ENCODE measurements at regions of chr4 and their contacts with region 1.

Region 1: DNA sequence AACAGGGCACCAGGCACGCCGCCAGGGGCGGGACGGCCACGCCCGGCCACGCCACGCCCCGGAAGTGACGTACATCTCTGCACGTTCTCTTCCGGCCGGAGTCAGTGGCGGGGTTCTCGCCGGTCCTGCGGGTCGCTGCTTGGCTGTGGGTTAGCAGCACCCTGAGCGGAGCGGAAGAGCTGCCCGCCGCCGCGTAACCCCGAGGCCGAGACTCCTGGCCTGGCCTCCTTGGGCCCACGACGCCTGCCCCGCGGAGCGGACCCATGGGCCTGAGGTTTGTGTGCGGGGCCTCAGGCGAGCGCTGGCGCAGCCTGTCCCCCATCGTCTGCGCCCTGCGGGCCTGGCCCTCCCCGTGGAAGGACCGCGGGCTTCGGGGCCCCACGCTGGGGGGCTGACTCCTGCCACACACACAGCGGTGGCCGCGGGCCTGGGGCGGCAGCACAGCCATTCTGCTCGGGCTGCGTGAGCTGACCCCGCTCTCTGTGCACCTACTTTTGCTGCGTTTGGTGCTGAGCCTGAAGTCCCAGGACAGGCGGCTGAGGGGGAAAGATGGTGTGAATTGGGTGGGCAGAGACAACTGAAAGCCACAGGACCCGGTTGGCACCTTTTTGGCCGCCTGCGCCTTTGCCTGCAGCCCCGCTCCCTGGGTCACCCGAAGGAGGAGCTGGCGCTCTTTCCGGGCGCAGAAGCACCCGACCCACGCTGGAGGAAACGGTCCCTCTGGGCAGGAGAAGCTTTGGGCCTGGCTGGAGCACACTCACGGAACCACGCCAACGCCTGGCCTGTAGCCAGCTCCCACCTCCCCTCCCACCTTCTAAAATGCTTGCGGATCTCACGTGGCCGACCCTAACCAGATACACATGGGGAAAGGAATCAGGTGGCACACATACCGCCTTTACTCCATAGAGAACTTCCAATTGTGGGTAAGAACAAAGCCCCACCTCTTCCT is 28.1 kb downstream of the NOP14 start:
- DNase-seq: peak; percentile 97
- ATAC-seq: peak; percentile 75
- H3K4me3 Mint-ChIP-seq: peak overlapping the region; percentile 84
- H3K27ac Mint-ChIP-seq: peak overlapping the region; percentile 89
- H3K4me1 Mint-ChIP-seq: peaks cover 55% of the 10 kb centered on the region
- H3K27me3 Mint-ChIP-seq: no peaks in the 10 kb centered on the region

Region 2: GRCh38 chr4:2948895-2949765 is 14.0 kb after region 1 on chr4:
- CTCF ChIA-PET with region 1: interaction called, 44 read pairs
- POLR2A ChIA-PET with region 1: interaction called, 6 read pairs
- DNase-seq: peak; percentile 47
- ATAC-seq: no peak
- H3K4me3 Mint-ChIP-seq: no peak overlapping the region
- H3K27ac Mint-ChIP-seq: no peak overlapping the region
- H3K4me1 Mint-ChIP-seq: peaks cover 5% of the 10 kb centered on the region
- H3K27me3 Mint-ChIP-seq: no peaks in the 10 kb centered on the region

Measured in activated CD8-positive, alpha-beta T cell treated with anti-CD3 and anti-CD28 coated beads, Interleukin-2, amount 10 ng/mL, durations not matched to agents 7 days and 5 days (primary cell).